ENCODE measurements at regions of chr15 and their contacts with region 1.

Region 1: DNA sequence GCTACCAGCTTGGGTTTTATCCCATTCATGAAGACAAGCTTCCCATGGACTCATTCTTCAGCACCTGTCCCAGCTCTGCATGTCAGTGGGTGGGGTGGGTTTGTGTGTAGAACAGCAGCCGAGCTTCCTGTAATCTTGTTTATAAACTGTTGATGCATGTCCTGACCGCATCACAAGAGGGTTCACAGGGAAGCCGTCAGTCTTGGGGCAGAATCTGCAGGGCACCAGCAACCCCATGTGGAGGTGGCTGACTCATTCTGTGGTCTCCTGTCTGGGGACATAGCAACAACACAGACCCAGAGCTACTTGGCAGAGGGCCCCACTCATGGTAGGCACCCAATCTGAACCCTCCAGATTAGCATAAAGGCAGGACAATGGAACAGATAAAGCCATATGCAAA is 35.6 kb downstream of the DAPK2 start:
- DNase-seq: peak; percentile 79
- H3K4me3 Mint-ChIP-seq: peak overlapping the region; percentile 64
- H3K27ac Mint-ChIP-seq: peak overlapping the region; percentile 87
- H3K4me1 Mint-ChIP-seq: peaks cover 61% of the 10 kb centered on the region
- H3K27me3 Mint-ChIP-seq: no peaks in the 10 kb centered on the region

Region 2: GRCh38 chr15:63939531-63940130 is 71.1 kb before region 1 on chr15:
- intact Hi-C with region 1: loop called (anchors 2 kb)
- DNase-seq: peak; percentile 35
- H3K4me3 Mint-ChIP-seq: peak overlapping the region; percentile 40
- H3K27ac Mint-ChIP-seq: peak overlapping the region; percentile 91
- H3K4me1 Mint-ChIP-seq: peaks cover 56% of the 10 kb centered on the region
- H3K27me3 Mint-ChIP-seq: no peaks in the 10 kb centered on the region

Region 3: DNA sequence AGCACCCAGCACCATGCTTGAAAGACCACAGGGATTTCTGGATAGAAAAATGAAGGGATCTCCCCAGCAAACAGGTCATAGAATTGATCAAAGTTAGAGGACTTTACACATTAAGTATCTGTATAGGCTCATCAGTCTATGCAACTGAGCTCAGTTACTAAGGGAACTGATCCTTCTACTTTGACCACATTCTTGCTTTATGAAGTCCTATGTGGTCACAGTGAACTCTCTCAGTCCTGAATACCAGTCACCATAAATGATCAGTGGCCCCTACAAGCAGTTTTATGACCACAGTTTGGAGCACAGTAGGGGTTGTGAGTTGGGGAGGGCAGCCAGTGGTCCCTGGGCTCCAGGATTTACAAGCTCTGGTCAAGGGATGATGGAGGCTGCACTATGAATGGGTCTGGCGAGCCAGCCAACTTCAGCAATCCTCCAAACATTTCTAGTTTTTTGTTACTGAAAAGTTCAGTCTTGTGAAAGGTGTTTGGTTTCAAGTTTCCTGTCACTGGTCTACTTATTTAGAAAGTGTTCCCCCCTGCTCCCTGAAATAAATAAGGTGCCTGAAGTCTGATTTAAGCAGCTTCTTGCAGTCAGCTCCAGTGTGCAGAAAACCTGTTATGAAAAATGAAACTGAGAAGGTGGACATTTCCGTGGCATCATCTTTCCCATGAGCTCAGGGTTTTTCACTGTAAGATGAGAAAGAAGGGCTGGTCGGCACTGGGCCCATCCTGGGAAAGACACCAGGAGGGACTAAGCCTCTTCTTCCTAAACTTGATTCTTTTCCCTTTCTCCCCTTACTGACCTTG is 39.9 kb before region 1 on chr15:
- intact Hi-C with region 1: loop called (anchors 1 kb)
- DNase-seq: peak; percentile 27
- H3K4me3 Mint-ChIP-seq: peak overlapping the region; percentile 77
- H3K27ac Mint-ChIP-seq: peak overlapping the region; percentile 100
- H3K4me1 Mint-ChIP-seq: peaks cover 56% of the 10 kb centered on the region
- H3K27me3 Mint-ChIP-seq: no peaks in the 10 kb centered on the region

Region 4: DNA sequence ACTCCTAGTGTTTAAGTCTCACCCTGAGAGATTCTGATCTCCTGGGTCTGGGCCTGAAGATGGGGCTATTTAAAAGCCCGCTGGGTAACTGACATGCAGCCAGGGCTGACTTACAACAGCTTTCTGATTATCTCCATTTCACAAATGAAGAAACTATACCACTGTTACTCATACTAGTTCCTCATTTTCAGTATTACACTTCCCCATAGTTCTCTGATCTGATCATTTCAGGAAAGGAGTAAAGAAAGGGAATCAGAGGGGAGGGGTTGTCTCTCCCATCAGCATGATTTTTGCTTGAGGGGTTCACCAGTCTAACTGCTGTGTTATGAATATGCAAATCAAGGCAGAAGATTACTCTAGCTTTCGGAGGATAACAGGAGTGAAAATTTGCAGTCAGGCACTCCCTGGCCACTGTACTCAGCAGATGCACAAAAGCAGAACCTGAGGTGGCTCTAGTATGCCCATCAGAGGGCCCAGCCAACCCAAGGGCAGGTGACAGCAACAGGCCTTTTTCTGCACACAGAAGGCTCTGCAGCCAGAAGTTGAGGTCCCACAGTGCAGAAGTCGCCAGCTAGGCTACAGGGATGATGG is 23.9 kb before region 1 on chr15:
- intact Hi-C with region 1: loop called (anchors 2 kb)
- DNase-seq: no peak
- H3K4me3 Mint-ChIP-seq: no peak overlapping the region
- H3K27ac Mint-ChIP-seq: no peak overlapping the region
- H3K4me1 Mint-ChIP-seq: peaks cover 18% of the 10 kb centered on the region
- H3K27me3 Mint-ChIP-seq: no peaks in the 10 kb centered on the region

Region 5: DNA sequence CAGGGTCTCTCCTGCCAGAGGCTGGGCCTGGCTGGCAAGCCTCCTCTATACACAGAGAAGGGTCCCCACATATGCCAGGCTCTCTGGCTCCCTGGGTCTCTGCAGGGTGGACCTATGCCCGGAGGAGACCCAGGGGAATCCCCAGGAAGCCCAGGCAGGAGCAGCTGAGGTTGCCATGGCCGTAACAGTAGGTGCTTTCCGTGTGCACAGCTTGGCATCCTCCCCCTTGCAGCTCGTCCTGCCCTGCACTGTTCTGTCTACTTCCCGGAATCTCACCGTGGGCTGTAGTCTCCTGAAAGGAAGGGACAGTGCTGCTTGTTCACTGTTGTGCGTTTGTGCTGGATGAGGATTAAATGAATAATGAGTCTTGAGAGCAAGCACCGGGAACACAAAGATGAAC is 12.2 kb before region 1 on chr15:
- intact Hi-C with region 1: loop called (anchors 1 kb)
- DNase-seq: no peak
- H3K4me3 Mint-ChIP-seq: no peak overlapping the region
- H3K27ac Mint-ChIP-seq: peak overlapping the region; percentile 45
- H3K4me1 Mint-ChIP-seq: peaks cover 74% of the 10 kb centered on the region
- H3K27me3 Mint-ChIP-seq: peaks cover 9% of the 10 kb centered on the region

Region 6: DNA sequence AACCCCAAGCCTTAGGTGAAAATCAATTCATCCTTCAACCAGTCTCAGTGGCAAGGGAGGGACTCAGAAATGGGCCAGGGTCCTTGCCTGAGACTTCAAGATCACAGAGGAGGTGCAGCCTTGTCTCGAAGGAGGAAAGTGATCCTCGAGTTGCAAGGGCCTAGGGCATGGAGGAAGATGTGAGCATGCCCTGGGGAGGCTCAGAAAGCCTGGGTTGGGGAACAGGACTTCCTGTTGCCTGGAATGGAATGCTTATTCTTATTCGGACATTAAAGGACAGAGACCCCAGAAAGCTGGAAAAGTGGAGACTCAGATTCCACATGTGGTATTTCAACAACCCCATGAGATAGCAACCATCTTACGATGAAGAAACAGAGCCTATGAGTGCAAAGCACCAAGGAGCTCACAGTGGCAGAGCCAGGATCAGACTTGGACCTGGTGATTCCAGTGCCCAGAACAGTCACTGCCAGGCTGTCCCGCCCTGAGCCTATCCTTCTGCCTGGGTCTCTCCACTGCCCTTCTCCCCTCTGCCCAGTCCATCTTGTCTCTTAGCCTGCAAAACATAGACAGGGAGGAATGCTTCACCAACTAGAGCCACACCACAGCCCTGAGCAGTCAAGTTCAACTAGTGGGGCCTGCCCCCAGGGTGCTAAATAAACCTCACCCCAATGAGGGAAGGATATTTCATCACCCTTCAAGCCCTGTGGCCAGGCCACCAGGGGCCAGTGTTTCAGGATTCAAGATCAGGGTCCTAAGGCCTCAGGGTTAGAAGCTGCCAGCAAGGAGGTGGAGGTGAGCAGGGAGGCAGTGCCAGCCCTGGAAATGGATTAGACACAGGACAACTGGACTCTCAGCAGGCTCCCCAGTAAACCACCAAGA is 13.7 kb after region 1 on chr15:
- intact Hi-C with region 1: loop called (anchors 2 kb)
- DNase-seq: no peak
- H3K4me3 Mint-ChIP-seq: no peak overlapping the region
- H3K27ac Mint-ChIP-seq: no peak overlapping the region
- H3K4me1 Mint-ChIP-seq: peaks cover 21% of the 10 kb centered on the region
- H3K27me3 Mint-ChIP-seq: peaks cover 2% of the 10 kb centered on the region

Region 7: GRCh38 chr15:64046347-64047153 is 35.8 kb after region 1 on chr15 and contains the start of gene DAPK2:
- intact Hi-C with region 1: loop called (anchors 1 kb)
- DNase-seq: peak; percentile 64
- H3K4me3 Mint-ChIP-seq: peak within 1 kb of the TSS; percentile 81
- H3K27ac Mint-ChIP-seq: peak within 1 kb of the TSS; percentile 49
- H3K4me1 Mint-ChIP-seq: peaks cover 36% of the 10 kb centered on the region
- H3K27me3 Mint-ChIP-seq: peaks cover 26% of the 10 kb centered on the region
- total RNA-seq, gene DAPK2: 8.6 and 8.7 TPM in 2 replicates